Posterior cingulate gyrus (tissue), 11 donors: ENCODE measurements at regions of chr1 and their contacts with region 1.

Region 1: GRCh38 chr1:109532365-109533136 is 7.1 kb upstream of the GPR61 start:
- DNase-seq: peak; percentile 78 to 98 (median 90)

Region 2: DNA sequence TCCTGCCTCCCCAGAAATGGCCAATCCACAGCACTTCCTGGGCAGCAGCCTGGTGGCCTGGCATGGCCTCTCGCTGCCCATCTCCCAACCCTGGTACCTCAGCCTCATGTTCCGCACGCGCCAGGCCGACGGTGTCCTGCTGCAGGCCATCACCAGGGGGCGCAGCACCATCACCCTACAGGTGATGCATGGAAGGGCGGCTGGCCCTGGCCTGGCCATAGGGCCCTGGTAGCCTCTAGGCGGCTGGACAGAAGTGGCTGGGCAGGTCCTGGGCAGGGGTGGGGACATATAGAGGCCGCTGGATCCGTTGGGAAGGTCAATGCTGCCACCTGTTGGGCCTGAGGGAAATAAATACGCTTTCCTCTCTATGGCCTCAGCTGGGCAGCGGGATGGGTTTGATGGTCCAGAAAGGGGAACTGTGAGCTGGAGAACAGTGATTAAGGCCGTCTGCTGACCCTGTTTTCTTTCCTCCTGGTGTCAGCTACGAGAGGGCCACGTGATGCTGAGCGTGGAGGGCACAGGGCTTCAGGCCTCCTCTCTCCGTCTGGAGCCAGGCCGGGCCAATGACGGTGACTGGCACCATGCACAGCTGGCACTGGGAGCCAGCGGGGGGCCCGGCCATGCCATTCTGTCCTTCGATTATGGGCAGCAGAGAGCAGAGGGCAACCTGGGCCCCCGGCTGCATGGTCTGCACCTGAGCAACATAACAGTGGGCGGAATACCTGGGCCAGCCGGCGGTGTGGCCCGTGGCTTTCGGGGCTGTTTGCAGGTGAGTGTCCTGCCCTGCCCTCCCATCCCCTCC is 268.8 kb before region 1 on chr1:
- intact Hi-C with region 1: loop called (anchors 10 kb)
- DNase-seq: peak; percentile 24 to 96 (median 75)

Region 3: DNA sequence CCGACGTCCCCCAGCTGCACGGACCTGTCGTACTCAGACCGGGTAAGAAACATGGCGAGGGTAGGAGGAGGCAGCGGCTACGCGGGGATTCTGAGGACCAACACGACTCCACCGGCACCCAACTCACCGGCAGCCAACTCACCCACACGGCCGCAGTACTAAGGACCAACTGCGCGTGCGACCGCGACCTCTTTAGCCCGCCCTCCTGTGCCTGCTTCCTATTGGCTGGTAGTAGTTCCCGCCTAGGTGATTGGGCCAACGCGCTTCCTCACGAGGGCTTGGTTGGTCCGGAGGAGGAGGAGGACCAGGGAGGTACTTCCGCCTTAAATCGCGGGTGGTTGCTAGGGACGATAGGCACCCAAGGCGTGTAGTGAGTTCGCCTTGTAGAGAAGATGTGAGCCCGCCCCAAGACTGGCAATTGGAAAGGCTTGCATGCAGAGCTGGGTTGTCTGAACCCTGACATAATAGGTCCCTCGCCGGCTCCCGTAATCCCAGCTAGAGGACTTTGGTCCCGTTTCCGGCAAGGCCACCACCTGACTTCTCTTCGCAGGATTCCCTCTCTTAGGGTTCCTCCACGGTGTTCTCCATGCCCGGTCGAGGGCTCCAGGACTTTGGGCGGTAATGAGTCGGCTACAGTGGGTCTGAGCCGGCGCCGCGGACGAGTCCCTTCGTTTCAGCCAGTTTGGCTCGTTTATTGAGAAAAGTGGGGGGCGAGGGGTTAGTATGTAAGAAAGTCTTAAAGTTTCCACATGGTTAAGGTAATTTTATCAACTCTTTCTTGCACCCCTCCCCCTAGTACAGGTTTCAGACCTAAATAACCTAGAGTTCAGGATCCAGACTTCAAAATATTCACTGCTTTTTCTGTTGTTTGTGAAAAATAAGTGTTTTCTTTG is 106.0 kb before region 1 on chr1 and contains the start of gene PSMA5:
- intact Hi-C with region 1: loop called (anchors 2 kb)
- DNase-seq: peak; percentile 94 to 100 (median 96)

Region 4: GRCh38 chr1:109490029-109490933 is 42.3 kb before region 1 on chr1:
- intact Hi-C with region 1: loop called (anchors 2 kb)
- DNase-seq: peak; percentile 57 to 95 (median 84)